ENCODE measurements at regions of chr7 and their contacts with region 1.

Region 1: GRCh38 chr7:45363669-45364068 is 206.1 kb downstream of the RAMP3 start:
- DNase-seq: no peak
- H3K4me3 ChIP-seq: no peak overlapping the region
- H3K27ac ChIP-seq: no peak overlapping the region
- H3K4me1 ChIP-seq: no peaks in the 10 kb centered on the region
- H3K27me3 ChIP-seq: peaks cover 3% of the 10 kb centered on the region
- CTCF ChIP-seq: no peak

Region 2: GRCh38 chr7:44847508-44847920 is 516.2 kb before region 1 on chr7:
- CTCF ChIA-PET with region 1: no interaction called
- dilution Hi-C with region 1: no loop called
- in situ Hi-C with region 1: no loop called
- intact Hi-C with region 1: no loop called
- DNase-seq: peak; percentile 83
- H3K4me3 ChIP-seq: peak overlapping the region; percentile 55 to 96 (median 94)
- H3K27ac ChIP-seq: peak overlapping the region; percentile 84
- H3K4me1 ChIP-seq: peaks cover 5% of the 10 kb centered on the region
- H3K27me3 ChIP-seq: no peaks in the 10 kb centered on the region
- CTCF ChIP-seq: peak; percentile 47 to 96

Region 3: DNA sequence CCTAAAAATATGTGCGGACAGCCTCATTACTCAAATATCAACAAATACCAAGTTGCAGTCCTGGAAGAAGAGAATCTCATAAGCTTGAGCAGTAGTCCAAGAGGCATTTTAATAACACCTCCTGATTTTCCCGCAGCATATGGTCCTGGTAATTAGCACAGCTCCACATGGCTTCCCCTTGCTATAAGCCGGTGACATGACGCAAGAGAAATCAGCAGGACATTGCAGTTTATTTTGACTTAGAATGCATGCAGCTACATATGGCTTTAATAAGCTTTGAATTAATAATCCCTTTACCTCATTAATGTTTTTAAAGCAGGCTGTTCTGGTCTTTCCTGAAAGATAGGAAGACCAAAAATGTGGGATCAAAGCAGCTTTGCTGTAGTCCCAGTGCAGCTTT is 68.4 kb before region 1 on chr7:
- CTCF ChIA-PET with region 1: no interaction called
- dilution Hi-C with region 1: loop called (anchors 5 kb)
- in situ Hi-C with region 1: no loop called
- intact Hi-C with region 1: no loop called
- DNase-seq: no peak
- H3K4me3 ChIP-seq: no peak overlapping the region
- H3K27ac ChIP-seq: no peak overlapping the region
- H3K4me1 ChIP-seq: no peaks in the 10 kb centered on the region
- H3K27me3 ChIP-seq: no peaks in the 10 kb centered on the region
- CTCF ChIP-seq: no peak

Region 4: DNA sequence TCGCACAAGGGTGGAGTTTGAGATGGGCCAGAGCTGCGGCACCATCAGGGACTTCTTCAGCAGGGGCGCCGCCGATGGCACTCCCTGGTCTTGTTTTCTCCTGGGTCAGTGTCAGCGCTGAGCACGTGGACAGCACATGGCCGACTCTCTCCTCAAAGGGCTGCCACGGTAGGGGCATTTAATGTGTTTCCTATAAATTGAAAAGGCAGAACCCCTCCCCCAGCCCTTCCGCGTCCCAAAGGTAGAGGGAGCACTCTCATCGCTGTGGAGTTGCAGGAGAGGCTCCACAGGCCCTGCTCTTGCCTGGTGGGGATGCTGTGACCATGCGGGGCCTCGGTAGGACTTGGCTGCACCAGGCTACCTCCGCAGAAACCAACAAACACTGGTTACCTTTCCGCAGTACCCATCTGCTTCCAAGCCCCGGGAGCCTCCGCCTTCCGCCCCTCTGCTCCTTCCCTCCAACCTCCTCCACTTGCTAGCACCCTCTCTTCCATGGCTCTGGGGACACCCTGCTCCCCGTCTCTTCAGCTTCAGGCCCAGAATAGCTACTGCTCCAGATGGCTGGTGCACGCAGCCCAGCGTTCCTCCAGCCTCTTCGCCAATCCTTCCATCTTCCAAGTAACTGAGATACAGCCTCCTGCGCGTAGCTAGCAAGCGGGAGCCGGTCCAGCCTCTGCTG is 44.2 kb after region 1 on chr7:
- CTCF ChIA-PET with region 1: no interaction called
- dilution Hi-C with region 1: loop called (anchors 5 kb)
- in situ Hi-C with region 1: no loop called
- intact Hi-C with region 1: no loop called
- DNase-seq: no peak
- H3K4me3 ChIP-seq: no peak overlapping the region
- H3K27ac ChIP-seq: no peak overlapping the region
- H3K4me1 ChIP-seq: peaks cover 1% of the 10 kb centered on the region
- H3K27me3 ChIP-seq: no peaks in the 10 kb centered on the region
- CTCF ChIP-seq: peak in 1 of 2 donors; percentile 41

Measured in mammary epithelial cell (primary cell).